MCF 10A (cell line): ENCODE measurements at regions of chr19 and their contacts with region 1.

Region 1: GRCh38 chr19:1103708-1104310 is at the start of gene GPX4:
- DNase-seq: peak; percentile 100
- H3K4me3 Mint-ChIP-seq: peak within 1 kb of the TSS; percentile 71
- H3K27ac Mint-ChIP-seq: peak within 1 kb of the TSS; percentile 78
- H3K4me1 Mint-ChIP-seq: peaks cover 10% of the 10 kb centered on the region
- H3K27me3 Mint-ChIP-seq: no peaks in the 10 kb centered on the region
- CTCF ChIP-seq: no peak
- total RNA-seq, gene GPX4: 179 and 191 TPM in 2 replicates

Region 2: GRCh38 chr19:1057176-1057855 is 46.5 kb before region 1 on chr19:
- CTCF ChIA-PET with region 1: interaction called, 4 read pairs
- POLR2A ChIA-PET with region 1: no interaction called
- intact Hi-C with region 1: loop called (anchors 1 kb)
- DNase-seq: peak; percentile 65
- H3K4me3 Mint-ChIP-seq: no peak overlapping the region
- H3K27ac Mint-ChIP-seq: peak overlapping the region; percentile 63
- H3K4me1 Mint-ChIP-seq: no peaks in the 10 kb centered on the region
- H3K27me3 Mint-ChIP-seq: no peaks in the 10 kb centered on the region
- CTCF ChIP-seq: peak; percentile 53

Region 3: DNA sequence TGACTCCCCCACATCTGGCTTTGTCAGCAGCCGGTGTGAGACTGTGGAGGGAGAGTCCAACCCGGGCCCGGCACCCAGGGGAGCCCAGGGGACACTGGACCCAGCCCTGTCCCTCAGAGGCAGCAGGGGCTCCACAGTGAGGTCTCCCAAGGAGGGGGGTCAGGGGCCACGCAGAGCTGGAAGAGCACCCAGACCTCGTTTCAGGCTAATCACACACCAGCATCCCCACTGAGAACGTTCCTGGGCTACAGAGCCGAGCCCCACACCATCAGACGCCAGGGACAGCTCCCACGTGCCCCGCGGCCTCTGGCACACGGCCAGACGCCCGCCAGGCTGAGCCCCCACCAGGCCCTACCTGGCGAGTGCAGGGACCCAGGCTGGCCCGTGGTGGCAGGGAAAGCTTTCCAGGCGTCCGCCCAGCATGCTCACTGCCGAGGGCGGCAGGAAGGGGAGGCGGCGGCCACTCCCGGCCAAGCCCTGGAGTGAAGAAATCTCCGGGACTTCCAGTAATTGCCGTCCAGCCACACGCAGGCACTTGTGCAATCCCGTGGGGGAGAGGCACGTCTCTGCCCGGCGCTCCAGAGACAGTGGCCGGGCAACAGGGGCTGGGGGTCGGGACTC is 51.0 kb after region 1 on chr19:
- CTCF ChIA-PET with region 1: interaction called, 3 read pairs
- POLR2A ChIA-PET with region 1: interaction called, 23 read pairs
- intact Hi-C with region 1: no loop called
- DNase-seq: peak; percentile 97
- H3K4me3 Mint-ChIP-seq: peak overlapping the region; percentile 62
- H3K27ac Mint-ChIP-seq: peak overlapping the region; percentile 83
- H3K4me1 Mint-ChIP-seq: peaks cover 5% of the 10 kb centered on the region
- H3K27me3 Mint-ChIP-seq: no peaks in the 10 kb centered on the region
- CTCF ChIP-seq: no peak

Region 4: GRCh38 chr19:1183534-1184172 is 79.8 kb after region 1 on chr19:
- CTCF ChIA-PET with region 1: no interaction called
- POLR2A ChIA-PET with region 1: interaction called, 13 read pairs
- intact Hi-C with region 1: loop called (anchors 5 kb)
- DNase-seq: peak; percentile 90
- H3K4me3 Mint-ChIP-seq: no peak overlapping the region
- H3K27ac Mint-ChIP-seq: peak overlapping the region; percentile 51
- H3K4me1 Mint-ChIP-seq: peaks cover 34% of the 10 kb centered on the region
- H3K27me3 Mint-ChIP-seq: no peaks in the 10 kb centered on the region
- CTCF ChIP-seq: no peak